ENCODE measurements at regions of chr7 and their contacts with region 1.

Region 1: DNA sequence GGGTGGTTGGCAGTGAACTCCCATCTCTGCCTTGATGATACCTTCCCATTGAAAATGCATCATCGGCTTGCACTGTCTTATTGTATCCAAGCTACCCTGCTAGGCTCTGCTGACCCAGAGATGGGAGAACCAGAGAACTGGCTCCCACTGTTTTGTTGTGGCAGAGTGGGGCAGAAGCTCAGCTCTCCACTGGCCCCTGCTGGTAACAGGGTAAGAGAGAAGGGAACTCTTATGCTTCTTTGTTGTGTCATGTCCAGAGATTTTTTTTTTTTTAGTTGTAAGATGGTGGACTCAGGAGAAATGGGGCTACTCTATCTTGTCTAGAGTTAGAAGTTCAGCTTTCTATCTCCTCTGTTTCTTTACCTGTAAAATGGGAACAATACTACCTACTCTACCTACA is 100.5 kb upstream of the SDK1 start:
- H3K4me3 ChIP-seq: no peak overlapping the region
- H3K27ac ChIP-seq: no peak overlapping the region
- H3K4me1 ChIP-seq: no peaks in the 10 kb centered on the region
- CTCF ChIP-seq: no peak

Region 2: DNA sequence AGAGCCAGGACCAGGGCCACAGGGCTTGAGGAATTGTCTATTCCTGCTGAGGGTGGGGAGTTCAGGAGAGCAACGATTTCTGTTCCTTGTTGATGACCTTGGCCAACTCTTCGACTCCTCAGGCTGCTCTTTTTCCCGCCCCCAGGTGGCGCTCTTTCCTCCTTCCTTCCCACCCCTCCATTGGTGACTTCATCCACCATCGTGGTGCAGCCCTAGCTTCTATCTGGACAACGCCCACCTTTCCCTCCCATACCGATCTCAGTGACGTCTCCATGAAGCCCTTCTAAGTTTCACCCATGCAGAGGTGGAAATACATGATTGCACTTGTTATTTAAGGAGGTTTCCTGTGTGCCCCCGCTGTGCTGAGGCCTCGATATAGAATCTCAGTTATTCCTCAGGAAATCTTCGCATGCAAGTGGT is 134.8 kb before region 1 on chr7:
- CTCF ChIA-PET with region 1: interaction called, 14 read pairs
- POLR2A ChIA-PET with region 1: no interaction called
- H3K4me3 ChIP-seq: no peak overlapping the region
- H3K27ac ChIP-seq: no peak overlapping the region
- H3K4me1 ChIP-seq: no peaks in the 10 kb centered on the region
- CTCF ChIP-seq: 0 out of 2 replicates have a peak, but pooled peaks have one; percentile 17

Region 3: DNA sequence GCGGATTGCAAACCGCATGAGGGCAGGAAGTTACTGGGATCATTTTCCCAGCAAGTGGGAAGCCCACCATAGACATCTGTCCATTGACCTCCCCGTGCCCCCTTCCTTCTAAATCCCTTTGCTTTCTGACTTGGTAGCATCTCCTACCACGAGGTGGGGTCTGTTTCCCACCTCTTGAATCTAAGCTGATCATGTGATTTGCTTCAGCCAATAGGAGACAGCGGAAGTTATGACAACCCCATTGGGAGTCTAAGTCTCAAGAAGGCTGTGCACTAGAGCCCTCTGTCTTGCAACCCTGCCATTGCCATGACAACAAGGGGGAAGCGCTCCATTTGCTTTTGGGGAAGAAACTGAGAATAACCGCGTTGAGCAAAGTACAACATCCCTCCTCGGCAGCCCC is 117.7 kb before region 1 on chr7:
- CTCF ChIA-PET with region 1: no interaction called
- POLR2A ChIA-PET with region 1: no interaction called
- H3K4me3 ChIP-seq: no peak overlapping the region
- H3K27ac ChIP-seq: no peak overlapping the region
- H3K4me1 ChIP-seq: no peaks in the 10 kb centered on the region
- CTCF ChIP-seq: no peak

Region 4: GRCh38 chr7:3162289-3162688 is 38.2 kb before region 1 on chr7:
- CTCF ChIA-PET with region 1: no interaction called
- POLR2A ChIA-PET with region 1: no interaction called
- H3K4me3 ChIP-seq: no peak overlapping the region
- H3K27ac ChIP-seq: no peak overlapping the region
- H3K4me1 ChIP-seq: no peaks in the 10 kb centered on the region; the same call in 1 of the 2 replicates
- CTCF ChIP-seq: no peak

Region 5: DNA sequence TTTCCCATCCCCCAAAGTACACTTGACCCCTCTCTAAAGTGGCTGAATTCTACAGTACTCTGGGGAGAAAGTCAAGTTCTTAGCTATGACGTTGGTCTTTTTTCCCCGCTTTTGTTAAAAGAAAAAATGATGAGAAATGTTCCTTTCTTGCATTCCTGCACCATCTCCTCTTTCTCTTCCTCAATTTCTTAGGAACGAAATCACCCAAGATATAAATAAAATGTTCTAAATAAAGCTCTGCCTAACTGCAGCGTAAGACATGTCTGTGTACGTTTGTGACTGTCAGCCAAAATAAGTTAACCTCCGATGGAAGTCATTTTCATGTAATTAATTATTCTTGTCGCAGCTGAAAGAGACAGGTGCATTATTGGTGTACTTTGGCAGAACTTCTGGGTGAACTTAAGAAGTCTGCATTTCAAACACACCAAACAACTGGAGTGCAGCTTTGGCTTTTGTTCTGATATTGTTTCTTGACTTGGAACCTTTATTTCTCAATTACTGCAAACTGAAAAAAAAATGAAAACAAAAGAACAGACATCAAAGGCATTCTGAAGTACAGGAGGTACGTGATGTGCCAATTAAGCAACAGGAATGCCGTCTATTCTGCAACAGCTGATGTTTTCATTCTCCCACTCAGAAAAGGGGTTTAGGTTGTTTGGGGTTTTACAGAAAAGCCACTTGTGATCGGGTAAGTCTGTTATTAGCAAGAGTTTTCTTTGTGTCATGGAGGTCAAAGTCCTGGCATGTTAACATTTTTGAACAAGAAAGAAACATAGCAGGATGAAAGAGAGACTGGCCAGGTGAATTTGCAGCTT is 18.1 kb after region 1 on chr7:
- CTCF ChIA-PET with region 1: no interaction called
- POLR2A ChIA-PET with region 1: no interaction called
- H3K4me3 ChIP-seq: no peak overlapping the region
- H3K27ac ChIP-seq: no peak overlapping the region
- H3K4me1 ChIP-seq: no peaks in the 10 kb centered on the region
- CTCF ChIP-seq: no peak

Region 6: GRCh38 chr7:3282457-3282856 is 82.0 kb after region 1 on chr7:
- CTCF ChIA-PET with region 1: no interaction called
- POLR2A ChIA-PET with region 1: no interaction called
- H3K4me3 ChIP-seq: no peak overlapping the region
- H3K27ac ChIP-seq: no peak overlapping the region
- H3K4me1 ChIP-seq: no peaks in the 10 kb centered on the region
- CTCF ChIP-seq: no peak

Measured in HEK293 (cell line).